Activated CD4-positive, alpha-beta T cell treated with anti-CD3 and anti-CD28 coated beads, Interleukin-2, amount 10 ng/mL, durations not matched to agents 24 days and 14 days (primary cell): ENCODE measurements at regions of chr3 and their contacts with region 1.

Region 1: DNA sequence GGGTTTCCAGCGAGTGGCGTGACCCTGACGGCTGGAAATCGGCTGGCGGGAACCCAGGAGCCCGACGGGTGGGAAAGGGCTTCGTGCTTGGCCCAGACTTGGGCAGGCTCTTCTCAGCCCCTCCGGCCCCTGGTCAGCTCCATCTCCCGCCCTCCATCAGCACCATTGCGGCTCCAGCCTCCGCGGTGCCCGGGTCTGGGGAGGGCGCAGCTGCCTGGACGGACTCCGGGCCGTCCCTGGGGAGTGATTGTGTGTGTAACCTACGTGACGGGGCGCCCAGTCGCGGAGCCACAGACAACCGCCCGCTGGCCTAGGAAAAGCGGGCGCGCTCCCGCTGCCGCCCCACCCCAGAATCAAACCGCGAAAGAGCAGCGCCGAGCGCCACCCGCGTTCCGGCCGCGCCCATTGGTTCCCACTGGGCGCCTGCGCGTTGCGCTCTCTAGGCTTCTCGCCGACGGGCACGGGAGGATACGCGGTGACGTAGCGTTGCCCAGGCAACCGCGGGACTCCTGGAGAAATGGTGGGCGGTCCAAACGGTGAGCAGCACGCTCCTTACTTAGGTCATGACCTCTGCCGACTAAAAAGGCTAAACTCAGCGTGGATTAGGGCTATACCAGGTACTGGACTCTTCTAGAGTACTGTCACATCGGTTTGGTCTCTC is at the start of gene CFAP20DC:
- DNase-seq: peak; percentile 98
- H3K4me3 Mint-ChIP-seq: peak within 1 kb of the TSS; percentile 77
- H3K27ac Mint-ChIP-seq: peak within 1 kb of the TSS; percentile 80
- H3K4me1 Mint-ChIP-seq: peaks cover 9% of the 10 kb centered on the region
- H3K27me3 Mint-ChIP-seq: peaks cover 6% of the 10 kb centered on the region
- total RNA-seq, gene CFAP20DC: 0.98 and 1.3 TPM in 2 replicates

Region 2: DNA sequence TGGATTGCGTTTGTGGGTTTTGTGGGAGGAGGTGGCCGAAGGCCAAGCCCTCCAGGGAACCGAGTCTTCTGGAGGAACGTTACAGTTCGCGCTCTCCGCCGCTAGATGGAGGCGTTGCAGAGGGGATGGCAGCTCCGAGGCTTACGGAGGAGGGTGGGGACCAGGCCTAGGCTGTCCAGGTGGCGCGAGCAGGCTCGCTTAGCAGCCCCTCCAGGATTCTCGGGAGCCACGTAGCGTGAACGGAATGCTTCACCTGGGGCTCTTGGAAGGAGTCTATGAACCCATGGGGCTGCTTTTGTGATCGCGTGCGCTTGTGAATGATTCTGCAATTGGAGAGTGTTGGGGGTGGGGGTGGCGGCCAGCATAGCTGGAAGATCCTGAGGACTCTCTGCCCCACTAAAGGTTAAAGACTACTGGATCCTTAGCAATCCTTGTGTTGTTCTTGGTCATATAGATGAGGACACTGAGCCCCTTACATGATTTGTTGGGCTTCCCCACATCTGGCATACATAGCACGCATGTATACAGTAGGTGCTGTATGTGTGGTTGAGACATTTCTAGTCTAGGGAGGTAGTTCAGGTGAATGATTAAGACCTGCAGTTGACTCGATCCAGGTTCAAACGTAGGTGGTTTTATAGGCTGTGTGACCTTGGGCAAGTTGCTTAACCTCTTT is 409.0 kb before region 1 on chr3:
- intact Hi-C with region 1: loop called (anchors 1 kb)
- DNase-seq: peak; percentile 87
- H3K4me3 Mint-ChIP-seq: no peak overlapping the region
- H3K27ac Mint-ChIP-seq: no peak overlapping the region
- H3K4me1 Mint-ChIP-seq: no peaks in the 10 kb centered on the region
- H3K27me3 Mint-ChIP-seq: no peaks in the 10 kb centered on the region

Region 3: GRCh38 chr3:58824285-58824684 is 225.5 kb before region 1 on chr3:
- intact Hi-C with region 1: loop called (anchors 1 kb)
- DNase-seq: peak; percentile 69
- H3K4me3 Mint-ChIP-seq: no peak overlapping the region
- H3K27ac Mint-ChIP-seq: no peak overlapping the region
- H3K4me1 Mint-ChIP-seq: no peaks in the 10 kb centered on the region
- H3K27me3 Mint-ChIP-seq: no peaks in the 10 kb centered on the region

Region 4: DNA sequence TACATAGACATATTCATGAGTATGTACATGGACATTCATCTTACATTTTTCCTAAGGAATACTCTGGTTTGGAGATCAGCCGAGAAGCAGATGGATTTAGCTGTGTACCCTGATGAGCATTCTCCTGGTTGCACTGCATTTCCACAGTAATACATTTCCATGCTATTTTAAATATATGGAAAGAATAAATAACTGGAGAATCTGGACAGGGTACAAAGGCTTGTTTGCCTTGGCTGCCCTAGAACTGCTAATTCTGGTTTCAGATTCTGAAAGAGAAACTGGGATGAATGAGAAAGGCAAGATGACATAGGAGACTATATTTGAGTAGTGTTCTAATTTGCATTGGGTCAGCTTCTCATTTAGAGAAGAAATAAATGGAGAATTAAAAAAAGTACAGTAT is 192.4 kb before region 1 on chr3:
- intact Hi-C with region 1: no loop called
- DNase-seq: no peak
- H3K4me3 Mint-ChIP-seq: no peak overlapping the region
- H3K27ac Mint-ChIP-seq: no peak overlapping the region
- H3K4me1 Mint-ChIP-seq: no peaks in the 10 kb centered on the region
- H3K27me3 Mint-ChIP-seq: no peaks in the 10 kb centered on the region

Region 5: DNA sequence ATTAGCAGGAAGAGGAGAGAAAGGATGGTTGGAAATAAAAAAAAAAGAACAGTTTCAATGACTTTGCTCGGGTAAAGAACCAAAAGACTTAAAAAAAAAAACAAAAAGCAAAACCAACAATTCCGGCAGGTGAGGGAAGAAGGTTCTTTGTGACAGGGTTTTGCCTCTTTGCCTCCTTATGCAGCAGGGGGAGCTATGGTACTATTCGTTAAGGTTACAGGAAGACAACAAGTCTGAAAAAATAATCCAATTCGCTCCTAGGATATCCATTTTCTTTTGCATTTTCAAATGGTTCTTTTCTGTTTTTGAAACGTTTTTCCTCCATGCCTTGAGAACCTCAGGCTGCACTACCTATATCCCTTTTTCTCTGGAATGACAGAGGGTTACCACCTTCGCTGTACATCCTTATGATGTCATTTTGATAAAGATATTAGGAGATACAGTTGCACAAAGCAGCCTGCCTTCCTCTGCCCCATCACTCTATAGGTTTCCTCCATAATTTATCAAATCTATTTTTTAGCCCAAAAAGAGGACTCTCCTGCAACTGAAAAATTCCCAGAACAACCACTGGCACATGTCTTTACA is 55.0 kb before region 1 on chr3:
- intact Hi-C with region 1: loop called (anchors 2 kb)
- DNase-seq: peak; percentile 85
- H3K4me3 Mint-ChIP-seq: no peak overlapping the region
- H3K27ac Mint-ChIP-seq: no peak overlapping the region
- H3K4me1 Mint-ChIP-seq: peaks cover 8% of the 10 kb centered on the region
- H3K27me3 Mint-ChIP-seq: peaks cover 9% of the 10 kb centered on the region